ENCODE measurements at regions of chr2 and their contacts with region 1.

Region 1: GRCh38 chr2:97697252-97698235 is 15.8 kb upstream of the ZAP70 start:
- DNase-seq: peak; percentile 84 to 88 (median 87)
- H3K4me3 ChIP-seq: no peak overlapping the region
- H3K4me3 Mint-ChIP-seq: peak overlapping the region in 3 of 8 donors; percentile 4 to 61 (median 23)
- H3K27ac ChIP-seq: no peak overlapping the region
- H3K27ac Mint-ChIP-seq: peak overlapping the region in 5 of 7 donors; percentile 37 to 88 (median 70)
- H3K4me1 ChIP-seq: no peaks in the 10 kb centered on the region
- H3K4me1 Mint-ChIP-seq: peaks cover 4 to 8% (median 6%) of the 10 kb centered on the region in 4 donors
- H3K27me3 ChIP-seq: no peaks in the 10 kb centered on the region
- H3K27me3 Mint-ChIP-seq: no peaks in the 10 kb centered on the region

Region 2: DNA sequence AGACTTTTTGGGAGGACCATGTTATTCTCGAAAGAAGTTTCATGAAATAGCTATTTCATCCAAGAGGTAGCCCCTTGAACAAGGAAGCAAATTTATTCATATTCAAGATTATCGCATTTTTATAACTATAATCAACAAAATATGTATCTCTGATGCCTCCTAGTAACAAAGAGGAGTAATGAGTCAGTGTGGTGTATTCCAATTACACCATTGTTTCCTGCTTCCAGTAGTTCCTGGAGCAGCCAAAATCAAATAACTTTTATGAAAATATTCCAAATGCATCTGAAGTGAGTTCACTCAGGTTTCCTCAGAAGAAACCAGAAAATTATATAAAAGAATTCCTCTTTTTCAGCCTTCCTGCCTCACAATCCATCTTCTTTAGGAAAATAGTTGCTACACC is 150.8 kb before region 1 on chr2:
- CTCF ChIA-PET with region 1: no interaction called
- POLR2A ChIA-PET with region 1: no interaction called
- intact Hi-C with region 1: no loop called
- DNase-seq: no peak
- H3K4me3 ChIP-seq: no peak overlapping the region
- H3K4me3 Mint-ChIP-seq: no peak overlapping the region
- H3K27ac ChIP-seq: no peak overlapping the region
- H3K27ac Mint-ChIP-seq: no peak overlapping the region
- H3K4me1 ChIP-seq: no peaks in the 10 kb centered on the region
- H3K4me1 Mint-ChIP-seq: no peaks in the 10 kb centered on the region
- H3K27me3 ChIP-seq: no peaks in the 10 kb centered on the region
- H3K27me3 Mint-ChIP-seq: no peaks in the 10 kb centered on the region

Region 3: DNA sequence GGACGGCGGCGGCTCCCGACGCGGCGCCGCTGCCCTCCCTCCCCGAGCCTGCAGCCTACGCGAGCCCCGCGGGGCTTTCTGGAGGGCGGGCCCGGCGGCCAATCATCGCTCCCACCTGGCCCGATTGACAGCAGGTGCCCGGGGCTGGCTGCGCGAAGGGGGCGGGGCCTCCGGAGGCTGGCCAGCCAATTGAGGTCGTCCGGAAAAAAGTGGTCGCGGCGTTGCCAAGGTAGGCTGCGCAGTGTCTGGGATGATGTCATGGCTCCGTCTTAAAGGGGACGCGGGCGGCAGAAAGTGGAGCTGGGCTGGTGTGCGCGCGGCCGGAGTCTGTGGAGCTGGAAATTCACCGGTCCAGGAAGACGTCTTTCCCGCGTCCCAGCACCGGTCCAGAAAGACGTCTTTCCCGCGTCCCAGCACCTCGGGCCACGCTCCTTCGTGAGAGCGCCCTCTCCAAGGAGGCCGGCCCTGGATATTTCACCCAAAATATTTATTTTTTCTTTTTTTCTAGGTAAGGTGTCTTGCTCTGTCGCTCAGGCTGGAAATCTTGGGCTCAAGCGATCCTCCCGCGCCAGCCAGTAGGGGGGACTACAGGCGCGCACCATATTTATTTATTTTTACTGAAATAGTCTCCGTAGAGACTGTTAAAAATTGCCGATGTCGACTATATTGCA is 33.4 kb before region 1 on chr2 and contains the start of gene ACTR1B:
- CTCF ChIA-PET with region 1: interaction called, 59 read pairs
- POLR2A ChIA-PET with region 1: interaction called, 14 read pairs
- intact Hi-C with region 1: loop called (anchors 1 kb)
- DNase-seq: peak; percentile 97 to 99 (median 98)
- H3K4me3 ChIP-seq: peak within 1 kb of the TSS; percentile 52 to 99
- H3K4me3 Mint-ChIP-seq: peak within 1 kb of the TSS; percentile 92 to 97 (median 96)
- H3K27ac ChIP-seq: peak within 1 kb of the TSS; percentile 92
- H3K27ac Mint-ChIP-seq: peak within 1 kb of the TSS; percentile 98 to 100 (median 99)
- H3K4me1 ChIP-seq: peaks cover 36% of the 10 kb centered on the region
- H3K4me1 Mint-ChIP-seq: peaks cover 15 to 41% (median 23%) of the 10 kb centered on the region in 4 donors
- H3K27me3 ChIP-seq: no peaks in the 10 kb centered on the region
- H3K27me3 Mint-ChIP-seq: no peaks in the 10 kb centered on the region
- total RNA-seq, gene ACTR1B: 96.1 to 97.6 TPM

Region 4: GRCh38 chr2:97718051-97718882 is 20.7 kb after region 1 on chr2:
- CTCF ChIA-PET with region 1: interaction called, 40 read pairs
- POLR2A ChIA-PET with region 1: interaction called, 21 read pairs
- intact Hi-C with region 1: no loop called
- DNase-seq: peak; percentile 73 to 86 (median 80)
- H3K4me3 ChIP-seq: peak overlapping the region; percentile 49 to 94
- H3K4me3 Mint-ChIP-seq: peak overlapping the region; percentile 93 to 98 (median 96)
- H3K27ac ChIP-seq: peak overlapping the region; percentile 91
- H3K27ac Mint-ChIP-seq: peak overlapping the region; percentile 92 to 99 (median 95)
- H3K4me1 ChIP-seq: peaks cover 92% of the 10 kb centered on the region
- H3K4me1 Mint-ChIP-seq: peaks cover 61 to 95% (median 73%) of the 10 kb centered on the region in 4 donors
- H3K27me3 ChIP-seq: no peaks in the 10 kb centered on the region
- H3K27me3 Mint-ChIP-seq: no peaks in the 10 kb centered on the region

Region 5: DNA sequence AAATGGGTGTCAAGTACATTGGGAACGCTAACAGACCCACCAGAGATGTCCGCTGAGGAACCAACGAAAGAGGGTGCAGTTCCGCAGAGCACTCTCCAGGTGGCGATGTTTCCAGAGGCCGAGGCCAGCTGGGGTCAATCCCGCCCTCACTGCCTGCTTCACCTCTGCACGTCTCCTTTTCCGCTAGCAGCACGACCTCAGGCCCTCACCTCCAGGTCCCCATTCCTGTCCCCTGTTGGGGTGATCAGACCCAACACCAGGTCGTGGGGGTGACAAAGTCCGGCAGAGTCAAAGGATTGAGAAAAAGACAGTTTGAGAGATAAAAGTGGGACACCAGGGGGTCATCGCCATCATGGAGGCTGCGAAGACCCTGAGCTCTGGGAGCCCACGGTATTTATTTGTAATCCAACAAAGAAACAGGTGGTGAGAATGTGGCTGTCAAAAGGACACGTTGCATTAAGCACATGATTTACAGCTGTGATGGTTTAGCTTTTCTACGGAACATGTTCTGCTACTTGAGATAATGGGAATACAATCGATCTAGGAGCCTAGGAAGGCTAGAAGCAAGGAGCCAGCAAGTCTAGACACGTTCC is 43.1 kb after region 1 on chr2:
- CTCF ChIA-PET with region 1: interaction called, 166 read pairs
- POLR2A ChIA-PET with region 1: interaction called, 4 read pairs
- intact Hi-C with region 1: no loop called
- DNase-seq: peak in 4 of 5 donors; percentile 31 to 43 (median 34)
- H3K4me3 ChIP-seq: no peak overlapping the region
- H3K4me3 Mint-ChIP-seq: peak overlapping the region in 3 of 8 donors; percentile 20 to 61 (median 50)
- H3K27ac ChIP-seq: no peak overlapping the region
- H3K27ac Mint-ChIP-seq: peak overlapping the region; percentile 25 to 90 (median 79)
- H3K4me1 ChIP-seq: peaks cover 55% of the 10 kb centered on the region
- H3K4me1 Mint-ChIP-seq: peaks cover 42 to 77% (median 57%) of the 10 kb centered on the region in 4 donors
- H3K27me3 ChIP-seq: no peaks in the 10 kb centered on the region
- H3K27me3 Mint-ChIP-seq: no peaks in the 10 kb centered on the region

Region 6: DNA sequence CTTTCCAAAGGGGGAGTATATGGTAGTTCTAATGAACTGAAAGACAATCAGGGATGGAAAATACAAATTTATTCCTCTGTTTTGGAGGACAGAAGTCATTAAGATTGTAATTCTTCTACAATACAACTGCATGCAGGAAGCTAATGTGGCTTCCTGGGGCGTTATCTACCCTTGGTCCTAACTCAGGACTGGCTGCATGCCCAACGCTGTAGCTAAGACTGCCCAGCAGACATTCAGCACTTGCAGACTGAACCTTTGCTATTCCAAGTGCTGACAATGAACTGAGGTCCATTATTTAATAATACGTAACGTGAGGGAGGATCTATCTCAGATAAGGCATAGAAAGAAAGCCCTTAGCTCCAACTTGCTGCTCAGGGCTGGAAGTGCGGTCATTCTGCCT is 69.0 kb after region 1 on chr2:
- CTCF ChIA-PET with region 1: interaction called, 13 read pairs
- POLR2A ChIA-PET with region 1: no interaction called
- intact Hi-C with region 1: no loop called
- DNase-seq: no peak
- H3K4me3 ChIP-seq: no peak overlapping the region
- H3K4me3 Mint-ChIP-seq: no peak overlapping the region
- H3K27ac ChIP-seq: no peak overlapping the region
- H3K27ac Mint-ChIP-seq: peak overlapping the region in 2 of 7 donors; percentile 0 to 8
- H3K4me1 ChIP-seq: peaks cover 8% of the 10 kb centered on the region
- H3K4me1 Mint-ChIP-seq: peaks cover 4 to 23% (median 12%) of the 10 kb centered on the region in 4 donors
- H3K27me3 ChIP-seq: no peaks in the 10 kb centered on the region
- H3K27me3 Mint-ChIP-seq: no peaks in the 10 kb centered on the region

Region 7: GRCh38 chr2:97890093-97890492 is 192.5 kb after region 1 on chr2:
- CTCF ChIA-PET with region 1: no interaction called
- POLR2A ChIA-PET with region 1: no interaction called
- intact Hi-C with region 1: no loop called
- DNase-seq: no peak
- H3K4me3 ChIP-seq: no peak overlapping the region
- H3K4me3 Mint-ChIP-seq: no peak overlapping the region
- H3K27ac ChIP-seq: no peak overlapping the region
- H3K27ac Mint-ChIP-seq: no peak overlapping the region
- H3K4me1 ChIP-seq: no peaks in the 10 kb centered on the region
- H3K4me1 Mint-ChIP-seq: peaks cover 0 to 6% (median under 1%) of the 10 kb centered on the region in 4 donors
- H3K27me3 ChIP-seq: no peaks in the 10 kb centered on the region
- H3K27me3 Mint-ChIP-seq: no peaks in the 10 kb centered on the region

Measured in CD4-positive, alpha-beta memory T cell (primary cell).